Activated CD8-positive, alpha-beta T cell treated with anti-CD3 and anti-CD28 coated beads, Interleukin-2, amount 10 ng/mL, durations not matched to agents 7 days and 5 days (primary cell): ENCODE measurements at regions of chr1 and their contacts with region 1.

Region 1: GRCh38 chr1:23591460-23592208 is 32.3 kb upstream of the ID3 start:
- DNase-seq: peak; percentile 70
- ATAC-seq: peak; percentile 76
- H3K4me3 Mint-ChIP-seq: peak overlapping the region; percentile 43
- H3K27ac Mint-ChIP-seq: peak overlapping the region; percentile 91
- H3K4me1 Mint-ChIP-seq: peaks cover 78% of the 10 kb centered on the region
- H3K27me3 Mint-ChIP-seq: no peaks in the 10 kb centered on the region

Region 2: GRCh38 chr1:23613191-23614031 is 21.8 kb after region 1 on chr1:
- CTCF ChIA-PET with region 1: interaction called, 14 read pairs
- POLR2A ChIA-PET with region 1: interaction called, 6 read pairs
- DNase-seq: peak; percentile 73
- ATAC-seq: peak; percentile 66
- H3K4me3 Mint-ChIP-seq: peak overlapping the region; percentile 53
- H3K27ac Mint-ChIP-seq: peak overlapping the region; percentile 96
- H3K4me1 Mint-ChIP-seq: peaks cover 68% of the 10 kb centered on the region
- H3K27me3 Mint-ChIP-seq: no peaks in the 10 kb centered on the region

Region 3: GRCh38 chr1:23619299-23620188 is 27.9 kb after region 1 on chr1:
- CTCF ChIA-PET with region 1: interaction called, 8 read pairs
- POLR2A ChIA-PET with region 1: interaction called, 10 read pairs
- DNase-seq: peak; percentile 80
- ATAC-seq: peak; percentile 77
- H3K4me3 Mint-ChIP-seq: peak overlapping the region; percentile 75
- H3K27ac Mint-ChIP-seq: peak overlapping the region; percentile 81
- H3K4me1 Mint-ChIP-seq: peaks cover 72% of the 10 kb centered on the region
- H3K27me3 Mint-ChIP-seq: no peaks in the 10 kb centered on the region